ENCODE measurements at regions of chr2 and their contacts with region 1.

Region 1: DNA sequence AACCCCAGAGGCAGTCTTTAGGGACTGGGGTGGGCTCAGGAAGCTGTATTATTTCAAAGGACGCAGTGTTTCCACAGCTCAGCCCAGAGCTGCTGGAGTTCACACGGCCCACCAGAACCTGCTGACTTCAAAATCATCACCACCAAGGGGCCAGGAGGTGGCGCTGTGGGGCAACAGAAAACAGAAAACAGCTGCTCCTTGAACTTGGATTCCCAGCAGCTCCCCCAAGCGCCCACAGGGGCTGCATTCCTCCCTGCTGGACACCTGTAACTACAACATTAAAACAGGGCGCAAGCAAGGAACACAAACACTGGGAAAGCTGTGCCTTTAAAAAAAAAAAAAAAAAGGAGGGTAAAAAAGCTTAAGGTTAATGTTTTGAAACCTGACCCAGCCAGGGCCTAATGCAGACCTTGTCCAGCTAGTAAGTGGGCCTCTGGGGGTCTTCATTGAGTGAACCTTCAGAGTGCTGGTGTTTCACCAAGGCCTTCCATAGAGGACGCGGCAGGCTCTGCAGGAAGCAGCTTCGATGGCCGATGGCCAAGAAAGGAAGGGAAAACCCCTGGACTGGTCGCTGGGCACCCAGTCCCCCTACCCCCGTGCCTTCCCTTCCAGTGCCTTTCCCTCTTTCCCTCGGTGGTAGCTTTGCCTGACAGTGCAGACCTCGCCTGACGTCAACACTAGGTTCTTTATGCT is 25.9 kb downstream of the MLPH start:
- H3K4me3 Mint-ChIP-seq: no peak overlapping the region
- H3K27ac Mint-ChIP-seq: no peak overlapping the region
- H3K4me1 Mint-ChIP-seq: no peaks in the 10 kb centered on the region
- H3K27me3 Mint-ChIP-seq: peaks cover 14% of the 10 kb centered on the region

Region 2: DNA sequence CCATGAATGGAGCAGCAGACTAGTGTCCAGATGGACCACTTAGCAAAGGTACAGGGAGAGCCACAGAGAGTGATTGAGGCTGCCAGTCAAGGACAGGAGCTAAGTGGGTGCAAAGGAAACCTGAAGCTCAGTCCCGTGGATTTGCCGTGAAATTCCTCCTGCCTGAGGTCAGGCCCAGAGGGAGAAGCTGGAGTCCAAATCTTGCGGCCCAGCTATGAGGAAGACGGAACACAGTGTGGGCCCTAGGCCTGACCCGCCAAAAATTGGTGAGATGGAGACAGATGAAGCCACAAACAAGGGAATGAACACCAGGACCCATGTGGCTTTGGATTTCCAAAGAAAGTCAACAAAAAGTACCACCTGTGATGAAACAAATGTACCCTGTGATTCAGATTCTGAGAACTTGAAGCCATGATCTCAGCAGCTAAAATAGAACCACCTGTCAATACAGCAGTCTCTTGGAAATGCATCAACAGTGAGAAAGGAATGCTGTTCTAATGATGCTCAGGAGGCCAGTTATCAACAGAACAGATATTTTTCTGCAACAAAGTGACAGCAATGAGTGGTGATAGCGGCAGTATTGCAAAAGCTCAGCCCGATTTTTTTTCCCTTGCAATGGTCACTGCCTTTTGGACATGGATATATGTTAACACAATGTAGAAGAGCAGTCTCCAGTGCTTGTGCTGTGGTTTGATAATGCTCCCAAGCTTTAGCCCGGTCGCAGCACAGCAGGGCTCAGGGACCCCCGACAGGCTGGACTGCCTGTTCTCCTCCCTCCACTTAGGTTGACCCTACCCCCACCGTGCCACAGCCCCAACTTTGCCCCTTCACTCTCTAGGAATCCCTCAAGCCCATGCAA is 109.7 kb before region 1 on chr2:
- intact Hi-C with region 1: no loop called
- H3K4me3 Mint-ChIP-seq: no peak overlapping the region
- H3K27ac Mint-ChIP-seq: no peak overlapping the region
- H3K4me1 Mint-ChIP-seq: no peaks in the 10 kb centered on the region
- H3K27me3 Mint-ChIP-seq: peaks cover 20% of the 10 kb centered on the region

Region 3: GRCh38 chr2:237744613-237745249 is 231.8 kb after region 1 on chr2:
- intact Hi-C with region 1: loop called (anchors 10 kb)
- H3K4me3 Mint-ChIP-seq: no peak overlapping the region
- H3K27ac Mint-ChIP-seq: peak overlapping the region; percentile 45
- H3K4me1 Mint-ChIP-seq: peaks cover 57% of the 10 kb centered on the region
- H3K27me3 Mint-ChIP-seq: no peaks in the 10 kb centered on the region

Measured in dendritic cell treated with granulocyte-macrophage colony-stimulating factor and Interleukin-4, amounts not matched to agents 40 ng/mL and 50 ng/mL, for 4 days (primary cell).